CD4-positive, alpha-beta T cell (primary cell): ENCODE measurements at regions of chr1 and their contacts with region 1.

Region 1: GRCh38 chr1:64136752-64137411 is 66.5 kb upstream of the UBE2U start:
- DNase-seq: peak; percentile 45 to 77 (median 59)
- ATAC-seq: peak; percentile 64
- H3K4me3 ChIP-seq: no peak overlapping the region
- H3K4me3 Mint-ChIP-seq: no peak overlapping the region
- H3K27ac ChIP-seq: no peak overlapping the region
- H3K27ac Mint-ChIP-seq: no peak overlapping the region
- H3K4me1 ChIP-seq: no peaks in the 10 kb centered on the region
- H3K4me1 Mint-ChIP-seq: no peaks in the 10 kb centered on the region
- H3K27me3 ChIP-seq: no peaks in the 10 kb centered on the region
- H3K27me3 Mint-ChIP-seq: no peaks in the 10 kb centered on the region
- CTCF ChIP-seq: peak; percentile 73

Region 2: GRCh38 chr1:63691701-63692425 is 445.0 kb before region 1 on chr1:
- CTCF ChIA-PET with region 1: interaction called, 3 read pairs
- POLR2A ChIA-PET with region 1: no interaction called
- intact Hi-C with region 1: loop called in 1 of 2 experiments (anchors 1 kb)
- DNase-seq: peak in 5 of 14 experiments; percentile 9 to 57 (median 31)
- ATAC-seq: no peak
- H3K4me3 ChIP-seq: no peak overlapping the region
- H3K4me3 Mint-ChIP-seq: no peak overlapping the region
- H3K27ac ChIP-seq: no peak overlapping the region
- H3K27ac Mint-ChIP-seq: no peak overlapping the region
- H3K4me1 ChIP-seq: no peaks in the 10 kb centered on the region
- H3K4me1 Mint-ChIP-seq: peaks cover 8% of the 10 kb centered on the region
- H3K27me3 ChIP-seq: no peaks in the 10 kb centered on the region
- H3K27me3 Mint-ChIP-seq: peaks cover 10% of the 10 kb centered on the region
- CTCF ChIP-seq: peak; percentile 66